Left lung (tissue), 14 donors: ENCODE measurements at regions of chr3 and their contacts with region 1.

Region 1: DNA sequence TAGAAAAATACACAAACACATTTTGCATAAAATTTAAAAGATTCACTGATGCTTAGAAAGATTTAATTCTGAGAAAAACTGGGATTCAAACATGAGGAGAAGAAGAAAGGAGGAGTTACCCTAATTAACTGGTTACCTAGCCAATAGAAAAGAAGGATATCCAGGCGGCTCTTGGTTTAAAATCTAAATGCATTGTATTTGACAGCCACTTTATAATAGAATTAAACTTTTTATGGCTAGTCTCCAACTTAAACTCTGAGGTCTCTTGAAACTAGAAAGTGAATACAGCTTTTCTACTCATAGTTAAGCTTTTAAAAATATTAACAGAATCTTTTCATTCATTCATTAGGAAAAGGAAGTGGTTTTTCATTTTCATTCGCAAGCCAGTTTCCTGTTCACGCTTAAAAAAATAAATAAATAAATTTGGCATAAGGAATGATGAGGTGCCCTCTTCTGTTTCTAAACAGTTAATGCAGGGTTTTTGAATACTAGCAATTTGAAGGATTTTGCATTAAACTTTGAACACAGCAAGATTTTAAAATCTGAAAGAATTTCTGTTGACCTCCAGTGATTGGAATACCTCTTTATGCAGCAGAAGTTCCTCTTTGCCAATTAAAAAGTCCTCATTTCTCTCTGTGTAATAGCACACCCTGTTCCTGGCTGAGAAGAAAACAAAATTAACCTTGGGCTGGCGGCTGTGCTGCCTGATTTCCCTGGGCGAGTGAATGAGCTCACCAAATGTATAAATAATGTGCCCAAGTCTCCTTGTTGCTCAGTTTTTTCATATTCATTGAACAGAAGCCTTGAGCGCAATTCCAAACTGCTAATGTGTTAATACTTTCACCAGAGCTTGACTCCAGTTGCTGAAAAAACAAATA is 105.1 kb downstream of the ZMAT3 start:
- DNase-seq: peak in 2 of 4 donors; percentile 36 to 43
- ATAC-seq: peak; percentile 69
- H3K4me3 ChIP-seq: no peak overlapping the region
- H3K27ac ChIP-seq: no peak overlapping the region
- H3K4me1 ChIP-seq: peaks cover 3 to 12% of the 10 kb centered on the region in 2 donors
- H3K27me3 ChIP-seq: no peaks in the 10 kb centered on the region
- CTCF ChIP-seq: peak in 1 of 2 donors; percentile 36

Region 2: DNA sequence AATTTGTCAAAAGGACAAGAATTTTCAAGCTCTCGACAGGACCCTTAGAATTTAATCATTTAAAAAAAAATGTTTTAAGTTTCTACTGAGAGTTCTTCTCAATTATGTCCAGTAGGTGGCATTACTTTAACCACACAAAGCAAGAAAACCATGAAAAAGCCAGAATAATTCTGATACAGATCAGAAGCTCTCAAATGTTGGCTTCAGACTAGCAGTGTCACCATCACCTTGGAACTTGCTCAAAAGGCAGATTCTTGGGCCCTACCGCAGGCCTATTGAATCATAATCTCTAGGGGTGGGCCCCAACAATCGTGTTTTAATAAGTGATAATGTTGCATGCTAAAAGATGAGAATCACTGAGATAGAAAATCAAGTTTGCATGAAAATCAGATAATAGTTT is 529.8 kb before region 1 on chr3:
- intact Hi-C with region 1: loop called in 1 of 2 experiments (anchors 10 kb)
- DNase-seq: peak in 2 of 4 donors; percentile 25 to 60
- ATAC-seq: peak; percentile 70
- H3K4me3 ChIP-seq: no peak overlapping the region
- H3K27ac ChIP-seq: no peak overlapping the region
- H3K4me1 ChIP-seq: no peaks in the 10 kb centered on the region
- H3K27me3 ChIP-seq: no peaks in the 10 kb centered on the region
- CTCF ChIP-seq: peak; percentile 26 to 44

Region 3: DNA sequence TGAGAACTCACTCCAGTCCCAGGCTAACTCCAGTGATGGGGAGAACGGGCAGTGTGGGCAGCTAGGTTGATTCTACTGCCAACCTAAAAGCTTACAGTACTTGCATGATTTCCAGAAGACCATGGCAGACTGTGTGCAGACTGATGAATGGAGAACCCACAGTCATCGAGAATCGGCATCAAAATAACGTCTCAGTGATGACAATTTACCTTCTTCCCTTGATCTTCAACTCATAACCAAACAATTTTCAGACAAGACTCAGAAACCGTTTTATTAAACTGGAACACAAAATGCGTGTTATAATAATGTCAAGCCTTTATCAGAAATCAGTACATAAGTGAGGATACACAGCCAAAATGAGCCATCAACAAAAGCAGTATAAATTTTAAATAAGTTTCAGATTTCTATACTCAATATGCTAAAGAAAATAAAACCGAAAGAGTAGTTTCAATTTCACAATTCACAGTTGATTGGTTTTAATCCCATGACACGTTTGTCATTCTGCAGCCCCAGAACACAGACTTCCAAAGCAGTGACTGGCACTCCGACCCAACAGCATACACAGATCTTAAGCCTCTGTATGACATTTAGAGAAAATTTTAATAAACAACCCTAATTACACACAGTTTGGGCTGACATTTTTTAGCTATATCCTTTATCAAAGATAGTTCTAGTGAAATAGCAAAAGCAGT is 50.6 kb after region 1 on chr3:
- intact Hi-C with region 1: no loop called
- DNase-seq: no peak
- ATAC-seq: no peak
- H3K4me3 ChIP-seq: no peak overlapping the region
- H3K27ac ChIP-seq: no peak overlapping the region
- H3K4me1 ChIP-seq: no peaks in the 10 kb centered on the region
- H3K27me3 ChIP-seq: no peaks in the 10 kb centered on the region
- CTCF ChIP-seq: no peak